GM10248 (cell line): ENCODE measurements at regions of chr19 and their contacts with region 1.

Region 1: GRCh38 chr19:6223488-6224301 is 56.1 kb downstream of the MLLT1 start:
- DNase-seq: no peak
- CTCF ChIP-seq: no peak

Region 2: GRCh38 chr19:6141217-6141616 is 82.5 kb before region 1 on chr19:
- CTCF ChIA-PET with region 1: no interaction called
- POLR2A ChIA-PET with region 1: no interaction called
- DNase-seq: no peak
- CTCF ChIP-seq: no peak

Region 3: DNA sequence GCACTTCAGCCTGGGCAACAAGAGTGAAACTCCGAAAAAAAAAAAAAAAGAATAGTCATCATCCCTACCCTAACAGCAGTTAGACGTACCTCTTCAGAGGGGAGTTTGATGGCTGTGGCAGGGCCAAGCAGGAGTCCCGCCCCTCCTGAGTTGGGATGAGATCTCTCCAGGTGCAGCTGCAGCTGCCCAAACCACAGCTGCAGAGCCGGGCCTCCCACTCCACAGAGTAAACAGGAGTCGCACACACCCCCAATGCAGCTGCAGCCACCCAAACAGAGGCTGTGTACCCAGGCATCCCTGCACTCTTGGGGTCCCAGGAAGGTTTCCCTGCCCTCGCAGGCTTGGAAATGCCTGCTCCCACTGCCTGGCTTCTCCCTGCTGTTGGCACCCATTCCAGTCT is 73.5 kb after region 1 on chr19:
- CTCF ChIA-PET with region 1: interaction called, 43 read pairs
- POLR2A ChIA-PET with region 1: no interaction called
- DNase-seq: no peak
- CTCF ChIP-seq: no peak